Dendritic cell treated with granulocyte-macrophage colony-stimulating factor and Interleukin-4, amounts not matched to agents 40 ng/mL and 50 ng/mL, for 4 days (primary cell): ENCODE measurements at regions of chr3 and their contacts with region 1.

Region 1: DNA sequence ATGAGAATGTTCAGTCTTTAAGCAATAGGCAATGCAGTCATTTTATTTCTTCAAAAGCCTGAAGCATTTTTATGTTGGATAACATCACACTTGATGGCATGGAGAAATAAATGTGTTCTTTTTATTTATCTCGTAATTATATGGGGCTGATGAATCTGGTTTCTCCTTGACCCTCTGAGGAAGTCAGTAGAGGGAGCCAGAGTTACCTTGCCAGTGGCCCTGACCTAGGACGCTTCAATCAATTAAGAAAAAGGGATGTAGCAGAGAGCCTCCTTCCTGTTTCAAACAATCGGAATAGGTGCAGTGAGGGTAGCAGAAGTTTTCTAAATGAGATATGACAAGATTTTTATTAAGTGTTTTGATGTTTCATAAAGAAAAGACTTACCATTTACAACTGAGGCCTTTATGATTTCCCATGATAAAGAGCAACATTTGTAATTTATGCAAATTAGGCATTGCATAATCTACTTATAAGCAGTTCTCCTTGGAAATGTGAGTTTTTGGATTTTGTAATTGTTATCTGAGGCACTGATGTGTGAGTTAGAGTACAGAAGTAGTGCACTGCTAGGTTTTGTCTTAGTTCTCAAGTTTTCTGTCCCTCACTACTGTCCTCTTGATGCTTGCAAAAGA is 129.1 kb downstream of the RAP2B start:
- H3K4me3 Mint-ChIP-seq: no peak overlapping the region
- H3K27ac Mint-ChIP-seq: peak overlapping the region; percentile 57
- H3K4me1 Mint-ChIP-seq: peaks cover 39% of the 10 kb centered on the region
- H3K27me3 Mint-ChIP-seq: no peaks in the 10 kb centered on the region

Region 2: DNA sequence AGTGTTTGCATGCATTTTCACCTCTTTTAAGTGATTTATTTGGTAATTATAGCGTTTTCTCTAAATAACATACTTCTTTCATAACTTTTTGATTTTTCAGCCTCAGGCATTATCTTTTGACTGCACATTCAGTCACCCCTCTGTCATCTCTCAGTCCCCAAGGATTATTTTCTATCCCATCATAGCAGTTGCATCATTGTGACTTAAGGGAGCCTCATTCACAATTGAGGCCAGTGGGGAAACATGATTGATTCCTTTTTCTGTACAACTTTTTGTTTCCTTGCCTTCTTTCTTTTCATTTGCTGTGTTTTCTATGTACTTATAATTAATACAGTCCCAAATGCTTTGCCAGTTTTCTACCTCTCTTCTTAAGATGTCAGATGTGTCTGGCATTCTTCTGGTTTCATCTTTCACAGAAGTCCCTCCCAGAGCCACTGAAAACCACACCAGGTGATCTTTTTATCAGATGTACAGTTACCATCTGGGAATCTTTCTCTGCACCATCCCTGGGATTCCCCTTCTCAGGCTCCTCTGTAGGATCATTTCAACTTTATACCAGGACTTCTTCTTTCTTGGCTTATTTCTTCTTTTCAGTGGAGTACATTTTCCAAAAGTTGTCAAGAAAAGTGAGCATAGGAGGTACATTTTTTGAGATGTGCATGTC is 22.3 kb after region 1 on chr3:
- intact Hi-C with region 1: no loop called
- H3K4me3 Mint-ChIP-seq: no peak overlapping the region
- H3K27ac Mint-ChIP-seq: peak overlapping the region; percentile 76
- H3K4me1 Mint-ChIP-seq: peaks cover 15% of the 10 kb centered on the region
- H3K27me3 Mint-ChIP-seq: no peaks in the 10 kb centered on the region

Region 3: GRCh38 chr3:153595186-153595815 is 304.1 kb after region 1 on chr3:
- intact Hi-C with region 1: loop called (anchors 5 kb)
- H3K4me3 Mint-ChIP-seq: no peak overlapping the region
- H3K27ac Mint-ChIP-seq: no peak overlapping the region
- H3K4me1 Mint-ChIP-seq: peaks cover 20% of the 10 kb centered on the region
- H3K27me3 Mint-ChIP-seq: peaks cover 2% of the 10 kb centered on the region

Region 4: DNA sequence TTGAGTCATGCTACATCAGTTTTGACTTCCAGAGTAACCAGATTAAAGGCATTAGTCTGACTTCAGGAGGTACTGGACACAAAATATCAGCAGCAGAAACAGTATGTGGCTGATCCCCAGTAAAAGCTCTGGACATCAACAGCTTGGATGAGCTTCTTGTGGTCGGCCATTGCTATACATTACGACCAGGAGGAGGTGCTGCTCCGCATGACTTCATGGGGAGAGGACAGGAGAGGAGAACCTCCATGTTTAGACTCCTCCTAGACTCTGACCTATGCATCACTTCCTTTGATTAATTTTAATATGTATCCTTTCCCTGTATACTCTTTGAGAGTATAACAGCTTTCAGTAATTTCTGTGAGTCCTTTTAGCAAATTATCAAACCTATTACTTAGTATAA is 544.4 kb after region 1 on chr3:
- intact Hi-C with region 1: no loop called
- H3K4me3 Mint-ChIP-seq: no peak overlapping the region
- H3K27ac Mint-ChIP-seq: no peak overlapping the region
- H3K4me1 Mint-ChIP-seq: no peaks in the 10 kb centered on the region
- H3K27me3 Mint-ChIP-seq: no peaks in the 10 kb centered on the region